Psoas muscle (tissue), 8 donors: ENCODE measurements at regions of chr21 and their contacts with region 1.

Region 1: DNA sequence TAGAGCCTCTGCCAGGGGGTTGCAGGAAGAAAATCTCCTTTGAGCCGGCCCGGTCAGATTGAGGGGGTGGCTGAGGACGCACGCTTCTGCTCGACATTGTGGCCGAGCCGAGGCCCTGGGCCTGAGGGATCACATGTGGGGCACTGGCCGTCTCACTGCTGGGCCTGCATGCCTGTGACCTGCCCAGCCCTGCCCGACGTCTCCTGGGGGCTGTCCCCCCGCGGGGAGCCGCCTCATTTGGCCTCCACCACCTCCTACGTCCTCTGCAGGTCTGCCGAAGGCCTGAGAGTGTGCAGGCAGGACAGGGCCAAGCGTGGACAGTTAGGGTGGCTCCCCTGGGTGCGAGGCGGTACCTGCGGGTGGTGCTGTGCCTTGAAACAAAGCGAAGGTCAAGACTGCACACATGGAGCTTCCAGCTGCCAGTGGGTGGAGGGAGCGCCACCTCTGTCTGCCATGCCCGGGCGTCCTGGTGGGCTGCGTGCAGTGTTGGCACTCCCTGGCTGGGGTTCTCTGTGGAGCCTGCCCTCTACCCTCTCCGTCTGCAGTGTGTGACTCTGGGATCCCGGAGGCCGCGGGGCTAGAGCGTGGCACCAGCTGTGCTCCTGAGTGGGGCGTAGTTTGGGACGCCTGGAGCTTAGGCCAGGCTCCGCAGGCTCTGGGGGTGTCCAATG is 51.7 kb downstream of the PCNT start:
- DNase-seq: peak; percentile 76 to 93
- ATAC-seq: peak; percentile 57 to 78 (median 64)
- H3K4me3 ChIP-seq: peak overlapping the region; percentile 60
- H3K27ac ChIP-seq: peak overlapping the region; percentile 96
- H3K4me1 ChIP-seq: peaks cover 51% of the 10 kb centered on the region
- H3K27me3 ChIP-seq: no peaks in the 10 kb centered on the region
- CTCF ChIP-seq: no peak

Region 2: GRCh38 chr21:46347791-46348381 is 27.8 kb before region 1 on chr21:
- intact Hi-C with region 1: loop called in 1 of 2 experiments (anchors 2 kb)
- DNase-seq: peak; percentile 89 to 97
- ATAC-seq: peak; percentile 86 to 95 (median 91)
- H3K4me3 ChIP-seq: peak overlapping the region; percentile 77
- H3K27ac ChIP-seq: peak overlapping the region; percentile 95
- H3K4me1 ChIP-seq: peaks cover 29% of the 10 kb centered on the region
- H3K27me3 ChIP-seq: no peaks in the 10 kb centered on the region
- CTCF ChIP-seq: peak; percentile 78